Transverse colon (tissue), 4 donors: ENCODE measurements at regions of chr15 and their contacts with region 1.

Region 1: DNA sequence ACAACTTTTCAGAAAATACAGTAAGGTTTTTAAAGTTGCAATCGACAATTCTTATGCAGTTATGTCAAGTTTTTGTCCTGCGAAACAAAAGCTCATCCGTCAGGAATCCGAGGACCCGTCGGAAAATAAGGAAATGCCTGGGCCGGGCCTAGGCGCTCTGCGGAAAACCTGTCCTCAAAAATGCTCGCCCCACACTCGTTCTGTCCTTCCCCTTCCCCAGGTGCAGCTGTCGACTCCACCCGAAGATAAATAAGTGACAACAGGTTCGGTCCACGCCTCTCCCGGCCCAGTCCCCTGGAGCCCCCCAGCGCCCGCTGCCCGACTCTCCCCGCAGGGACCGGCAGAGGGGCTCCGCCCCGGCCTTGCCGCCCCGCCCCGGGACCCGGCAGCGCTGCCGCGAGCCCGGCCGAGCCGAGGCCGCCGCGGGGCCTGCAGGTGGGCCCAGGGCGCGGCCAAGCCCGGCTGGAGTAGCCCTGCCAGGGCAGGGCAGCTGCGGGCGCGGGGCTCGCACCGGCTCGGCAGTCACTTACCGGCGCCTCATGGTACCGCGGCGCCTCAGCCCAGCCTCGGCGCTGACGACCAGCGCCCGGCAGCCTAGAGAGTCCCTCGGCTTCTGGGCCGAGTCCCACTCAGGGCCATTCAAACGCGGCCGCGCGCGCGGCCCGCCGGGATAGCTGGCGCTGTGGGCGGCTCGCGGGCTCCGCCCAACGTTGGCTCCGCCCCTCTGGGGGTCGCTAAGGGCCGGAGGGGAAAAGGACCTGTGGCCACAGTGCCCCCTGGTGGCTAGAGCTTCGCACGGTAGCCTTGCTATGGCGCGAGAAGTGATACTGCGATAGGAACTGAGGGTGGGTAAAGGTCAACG is at the start of gene KATNBL1:
- DNase-seq: peak; percentile 99
- H3K4me3 ChIP-seq: peak within 1 kb of the TSS; percentile 60 to 73 (median 66)
- H3K27ac ChIP-seq: peak within 1 kb of the TSS; percentile 89 to 94 (median 92)
- H3K4me1 ChIP-seq: peaks cover 0 to 18% (median 8%) of the 10 kb centered on the region in 4 donors
- H3K27me3 ChIP-seq: no peaks in the 10 kb centered on the region
- CTCF ChIP-seq: peak; percentile 92 to 96 (median 94)
- EP300 ChIP-seq: no peak
- POLR2A ChIP-seq: peak; percentile 85
- total RNA-seq, gene KATNBL1: 41.1 to 137 (median 80.3) TPM

Region 2: DNA sequence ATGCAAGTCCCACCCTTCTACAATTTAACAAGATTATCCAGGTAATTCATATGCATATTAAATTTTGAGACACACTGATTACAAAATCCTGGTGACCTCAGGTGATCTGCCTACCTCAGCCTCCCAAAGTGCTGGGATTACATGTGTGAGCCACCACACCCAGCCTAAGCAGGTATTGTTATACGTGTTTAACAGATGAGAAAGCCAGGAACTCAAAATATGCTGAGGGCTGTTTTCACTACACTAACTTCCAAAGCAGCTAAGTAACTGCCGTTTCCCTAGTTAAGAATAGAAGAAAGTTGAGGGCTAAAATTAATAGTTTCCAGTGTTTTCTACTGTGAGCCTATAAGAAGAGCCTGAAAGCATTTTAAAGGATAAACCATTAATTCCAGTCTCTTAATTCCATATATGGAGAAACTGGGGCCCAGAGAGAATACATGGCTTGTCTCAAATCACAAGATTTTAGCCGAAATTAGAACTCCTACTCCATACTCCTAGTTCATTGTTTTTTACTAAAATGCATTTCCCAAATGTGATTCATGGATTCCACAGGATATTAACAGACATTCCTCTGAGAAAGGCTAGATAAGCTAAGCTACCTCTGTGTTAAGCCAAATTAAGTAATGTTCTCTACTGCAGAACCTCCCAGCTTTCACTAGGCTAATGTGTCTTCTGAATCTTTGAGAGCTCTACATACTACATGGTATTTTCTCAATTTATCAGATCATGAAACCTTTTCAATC is 153.6 kb before region 1 on chr15:
- in situ Hi-C with region 1: loop called in 3 of 4 experiments (anchors 10 to 25 kb)
- intact Hi-C with region 1: loop called (anchors 5 kb)
- DNase-seq: no peak
- H3K4me3 ChIP-seq: no peak overlapping the region
- H3K27ac ChIP-seq: no peak overlapping the region
- H3K4me1 ChIP-seq: no peaks in the 10 kb centered on the region
- H3K27me3 ChIP-seq: no peaks in the 10 kb centered on the region
- CTCF ChIP-seq: no peak
- EP300 ChIP-seq: no peak
- POLR2A ChIP-seq: no peak

Region 3: GRCh38 chr15:34065941-34066340 is 143.7 kb before region 1 on chr15:
- in situ Hi-C with region 1: loop called in 3 of 4 experiments (anchors 10 to 25 kb)
- intact Hi-C with region 1: loop called (anchors 5 kb)
- DNase-seq: no peak
- H3K4me3 ChIP-seq: no peak overlapping the region
- H3K27ac ChIP-seq: no peak overlapping the region
- H3K4me1 ChIP-seq: peaks cover 0 to 6% (median 0%) of the 10 kb centered on the region in 4 donors
- H3K27me3 ChIP-seq: no peaks in the 10 kb centered on the region
- CTCF ChIP-seq: no peak
- EP300 ChIP-seq: no peak
- POLR2A ChIP-seq: no peak